ENCODE measurements at regions of chr7 and their contacts with region 1.

Region 1: GRCh38 chr7:32761451-32762205 is 129.9 kb downstream of the KBTBD2 start:
- DNase-seq: peak; percentile 11
- ATAC-seq: no peak
- H3K4me3 Mint-ChIP-seq: no peak overlapping the region
- H3K27ac Mint-ChIP-seq: no peak overlapping the region
- H3K4me1 Mint-ChIP-seq: peaks cover 9% of the 10 kb centered on the region
- H3K27me3 Mint-ChIP-seq: peaks cover 43% of the 10 kb centered on the region

Region 2: GRCh38 chr7:32694182-32694581 is 67.4 kb before region 1 on chr7:
- CTCF ChIA-PET with region 1: no interaction called
- POLR2A ChIA-PET with region 1: no interaction called
- intact Hi-C with region 1: loop called in 1 of 2 experiments (anchors 5 kb)
- DNase-seq: no peak
- ATAC-seq: no peak
- H3K4me3 Mint-ChIP-seq: no peak overlapping the region
- H3K27ac Mint-ChIP-seq: no peak overlapping the region
- H3K4me1 Mint-ChIP-seq: peaks cover 6% of the 10 kb centered on the region
- H3K27me3 Mint-ChIP-seq: peaks cover 3% of the 10 kb centered on the region

Region 3: DNA sequence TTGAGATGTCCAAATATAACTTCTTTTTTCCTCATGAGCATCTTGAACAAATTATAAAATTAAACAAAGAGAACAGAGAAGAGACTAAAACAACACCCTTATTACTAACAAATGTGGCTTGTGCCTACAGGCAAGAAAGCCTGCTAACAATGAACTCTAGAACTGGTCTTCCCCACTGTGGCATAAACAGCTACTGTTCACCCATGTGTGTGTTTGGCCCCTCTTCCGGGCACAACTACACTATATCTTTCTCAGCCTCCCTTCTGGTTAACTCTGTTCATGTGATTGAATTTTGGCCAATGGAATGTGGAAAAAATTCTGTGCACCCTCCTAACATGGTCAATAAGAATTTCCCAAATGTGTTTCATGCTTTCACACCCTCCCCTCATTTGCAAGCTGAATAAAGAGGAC is 12.9 kb after region 1 on chr7:
- CTCF ChIA-PET with region 1: no interaction called
- POLR2A ChIA-PET with region 1: no interaction called
- intact Hi-C with region 1: no loop called
- DNase-seq: no peak
- ATAC-seq: no peak
- H3K4me3 Mint-ChIP-seq: no peak overlapping the region
- H3K27ac Mint-ChIP-seq: no peak overlapping the region
- H3K4me1 Mint-ChIP-seq: no peaks in the 10 kb centered on the region
- H3K27me3 Mint-ChIP-seq: peaks cover 23% of the 10 kb centered on the region

Region 4: DNA sequence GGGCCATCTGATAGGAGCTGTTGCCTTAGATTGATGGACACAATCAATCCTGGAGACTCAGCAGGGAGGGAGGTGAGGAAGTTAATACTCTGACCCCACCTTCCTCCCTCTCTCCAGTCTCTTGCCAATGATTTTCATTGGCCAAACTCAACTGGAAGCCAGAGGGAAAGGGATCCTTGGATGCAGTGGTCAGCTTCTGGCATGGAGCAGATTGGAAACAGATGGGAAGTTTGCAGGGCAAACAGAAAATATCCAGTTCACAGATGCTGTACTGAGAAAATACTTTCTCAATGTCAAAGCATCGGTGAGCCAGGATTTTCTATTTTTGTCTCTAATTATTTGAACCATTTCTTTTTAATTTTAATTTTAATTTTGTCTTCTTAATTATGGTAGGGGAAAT is 538.5 kb after region 1 on chr7:
- CTCF ChIA-PET with region 1: no interaction called
- POLR2A ChIA-PET with region 1: no interaction called
- intact Hi-C with region 1: no loop called
- DNase-seq: no peak
- ATAC-seq: no peak
- H3K4me3 Mint-ChIP-seq: no peak overlapping the region
- H3K27ac Mint-ChIP-seq: no peak overlapping the region
- H3K4me1 Mint-ChIP-seq: no peaks in the 10 kb centered on the region
- H3K27me3 Mint-ChIP-seq: no peaks in the 10 kb centered on the region

Measured in activated CD4-positive, alpha-beta T cell treated with anti-CD3 and anti-CD28 coated beads for 36 hours (primary cell).